Activated CD4-positive, alpha-beta T cell treated with anti-CD3 and anti-CD28 coated beads, Interleukin-2, amount 10 ng/mL, durations not matched to agents 24 days and 14 days (primary cell): ENCODE measurements at regions of chr17 and their contacts with region 1.

Region 1: GRCh38 chr17:50547035-50547735 is at the start of gene SPATA20:
- DNase-seq: peak; percentile 96
- H3K4me3 Mint-ChIP-seq: peak within 1 kb of the TSS; percentile 83
- H3K27ac Mint-ChIP-seq: peak within 1 kb of the TSS; percentile 80
- H3K4me1 Mint-ChIP-seq: peaks cover 16% of the 10 kb centered on the region
- H3K27me3 Mint-ChIP-seq: peaks cover 19% of the 10 kb centered on the region
- total RNA-seq, gene SPATA20: 21.6 and 22.4 TPM in 2 replicates

Region 2: DNA sequence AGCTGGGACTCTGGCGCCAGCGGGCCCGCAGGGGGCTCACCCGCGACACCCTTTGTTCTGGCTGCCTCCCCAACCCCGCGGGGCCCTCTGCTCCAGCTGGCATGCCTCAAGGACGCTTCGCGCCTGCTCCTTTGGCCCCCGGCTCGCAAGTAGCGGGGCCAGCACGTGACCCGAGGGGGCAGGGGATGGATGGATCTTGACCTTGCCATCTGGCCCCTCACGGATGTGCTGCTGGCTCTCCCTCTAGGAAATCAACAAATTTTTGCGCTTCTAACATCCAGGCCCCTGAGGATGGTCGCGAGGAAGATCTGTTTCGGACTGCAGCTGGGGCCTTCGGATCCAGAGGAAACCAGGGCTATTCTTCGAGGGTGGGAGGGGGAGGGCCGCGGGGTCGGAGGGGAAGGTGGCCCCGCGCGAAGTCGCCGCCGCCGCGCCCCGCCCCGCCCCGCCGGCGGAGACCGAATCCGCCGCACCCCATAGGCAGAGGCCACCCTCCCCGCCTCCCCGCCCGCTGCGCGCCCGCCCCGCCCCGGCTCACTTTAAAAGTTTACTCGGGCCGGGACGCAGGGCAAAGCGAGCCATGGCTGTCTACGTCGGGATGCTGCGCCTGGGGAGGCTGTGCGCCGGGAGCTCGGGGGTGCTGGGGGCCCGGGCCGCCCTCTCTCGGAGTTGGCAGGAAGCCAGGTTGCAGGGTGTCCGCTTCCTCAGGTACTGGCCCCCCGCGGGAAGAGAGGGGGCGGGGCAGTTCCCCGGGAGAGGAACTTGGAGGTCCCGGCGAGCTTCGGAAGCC is 121.3 kb before region 1 on chr17 and contains the start of gene ACSF2:
- intact Hi-C with region 1: no loop called
- DNase-seq: peak; percentile 92
- H3K4me3 Mint-ChIP-seq: peak within 1 kb of the TSS; percentile 87
- H3K27ac Mint-ChIP-seq: peak within 1 kb of the TSS; percentile 86
- H3K4me1 Mint-ChIP-seq: peaks cover 29% of the 10 kb centered on the region
- H3K27me3 Mint-ChIP-seq: no peaks in the 10 kb centered on the region
- total RNA-seq, gene ACSF2: 13.6 and 16.5 TPM in 2 replicates

Region 3: DNA sequence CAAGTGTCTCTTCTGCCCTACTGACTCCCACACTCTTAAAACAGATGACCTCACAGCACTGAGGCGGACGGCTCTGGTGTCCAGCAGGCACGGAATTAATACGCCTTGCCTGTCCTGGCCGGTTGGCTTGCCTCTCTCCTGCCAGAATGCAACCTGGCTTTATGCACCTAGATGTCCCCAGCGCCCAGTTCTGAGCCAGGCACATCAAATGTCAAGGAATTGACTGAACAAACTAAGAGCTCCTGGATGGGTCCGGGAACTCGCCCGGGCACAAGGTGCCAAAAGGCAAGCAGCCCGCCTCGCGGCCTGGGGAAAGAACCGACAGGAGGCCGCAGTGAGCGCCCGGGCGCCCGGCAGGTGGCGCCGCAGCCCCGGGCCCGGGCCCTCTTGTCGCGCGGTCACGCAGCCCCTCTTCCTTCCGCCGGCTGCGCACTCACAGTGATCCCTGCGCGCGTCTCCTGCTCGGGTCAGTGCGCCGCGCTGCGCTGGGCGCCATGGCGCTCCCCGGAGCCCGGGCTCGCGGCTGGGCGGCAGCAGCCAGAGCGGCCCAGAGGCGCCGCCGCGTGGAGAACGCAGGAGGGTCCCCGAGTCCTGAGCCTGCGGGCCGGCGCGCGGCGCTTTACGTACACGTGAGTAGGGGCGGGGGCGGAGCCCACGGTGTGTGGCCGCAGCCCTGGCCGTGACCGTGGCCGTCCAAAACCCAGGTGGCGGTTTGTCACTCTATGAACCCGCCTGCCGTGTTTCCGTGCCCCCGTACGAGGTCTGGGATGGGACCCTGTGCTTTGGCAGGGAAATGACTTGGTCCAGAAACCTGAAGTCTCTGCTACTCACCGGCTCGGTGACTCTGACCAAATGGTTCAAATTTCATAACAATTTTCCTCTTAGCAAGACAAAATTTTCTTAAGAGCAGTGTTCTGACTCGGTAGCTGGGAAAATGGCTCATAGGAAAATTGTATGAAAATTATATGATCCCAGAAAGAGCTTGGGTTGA is 68.5 kb before region 1 on chr17 and contains the start of gene RSAD1:
- intact Hi-C with region 1: loop called (anchors 1 kb)
- DNase-seq: peak; percentile 95
- H3K4me3 Mint-ChIP-seq: peak within 1 kb of the TSS; percentile 86
- H3K27ac Mint-ChIP-seq: peak within 1 kb of the TSS; percentile 91
- H3K4me1 Mint-ChIP-seq: peaks cover 13% of the 10 kb centered on the region
- H3K27me3 Mint-ChIP-seq: peaks cover 4% of the 10 kb centered on the region
- total RNA-seq, gene RSAD1: 53.6 and 61.2 TPM in 2 replicates

Region 4: DNA sequence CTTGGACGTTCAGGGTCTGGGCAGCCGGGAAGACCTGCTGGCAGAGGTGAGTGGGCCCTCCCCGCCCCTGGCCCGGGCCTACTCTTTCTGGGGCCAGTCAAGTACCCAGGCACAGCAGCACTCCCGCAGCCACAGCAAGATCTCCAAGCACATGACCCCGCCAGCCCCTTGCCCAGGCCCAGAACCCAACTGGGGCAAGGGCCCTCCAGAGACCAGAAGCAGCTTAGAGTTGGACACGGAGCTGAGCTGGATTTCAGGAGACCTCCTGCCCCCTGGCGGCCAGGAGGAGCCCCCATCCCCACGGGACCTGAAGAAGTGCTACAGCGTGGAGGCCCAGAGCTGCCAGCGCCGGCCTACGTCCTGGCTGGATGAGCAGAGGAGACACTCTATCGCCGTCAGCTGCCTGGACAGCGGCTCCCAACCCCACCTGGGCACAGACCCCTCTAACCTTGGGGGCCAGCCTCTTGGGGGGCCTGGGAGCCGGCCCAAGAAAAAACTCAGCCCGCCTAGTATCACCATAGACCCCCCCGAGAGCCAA is 78.9 kb after region 1 on chr17:
- intact Hi-C with region 1: loop called (anchors 1 kb)
- DNase-seq: peak; percentile 88
- H3K4me3 Mint-ChIP-seq: no peak overlapping the region
- H3K27ac Mint-ChIP-seq: no peak overlapping the region
- H3K4me1 Mint-ChIP-seq: peaks cover 10% of the 10 kb centered on the region
- H3K27me3 Mint-ChIP-seq: peaks cover 31% of the 10 kb centered on the region

Region 5: DNA sequence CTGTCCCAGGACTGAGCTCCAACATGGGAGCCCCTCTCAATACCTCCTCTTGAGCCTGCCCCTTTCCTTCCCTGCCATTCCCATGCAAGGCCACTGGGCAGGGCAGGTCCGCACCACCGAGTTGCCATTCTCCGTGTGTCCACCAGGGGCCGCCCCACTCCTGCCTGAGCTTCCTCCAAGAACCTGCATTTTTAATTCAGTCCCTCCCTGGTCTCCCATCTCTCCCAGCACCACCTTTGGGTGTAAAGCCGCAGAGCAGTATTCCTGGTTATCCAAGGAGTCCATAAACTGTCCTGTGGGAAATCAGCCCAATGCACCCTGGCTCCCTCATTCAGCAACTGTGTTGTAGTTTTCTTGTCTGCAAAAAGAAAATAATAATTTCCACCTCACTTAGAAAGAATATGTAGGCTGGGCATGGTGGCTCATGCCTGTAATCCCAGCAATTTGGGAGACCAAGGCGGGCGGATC is 236.0 kb after region 1 on chr17:
- intact Hi-C with region 1: loop called (anchors 2 kb)
- DNase-seq: peak; percentile 94
- H3K4me3 Mint-ChIP-seq: no peak overlapping the region
- H3K27ac Mint-ChIP-seq: peak overlapping the region; percentile 32
- H3K4me1 Mint-ChIP-seq: peaks cover 12% of the 10 kb centered on the region
- H3K27me3 Mint-ChIP-seq: peaks cover 23% of the 10 kb centered on the region

Region 6: DNA sequence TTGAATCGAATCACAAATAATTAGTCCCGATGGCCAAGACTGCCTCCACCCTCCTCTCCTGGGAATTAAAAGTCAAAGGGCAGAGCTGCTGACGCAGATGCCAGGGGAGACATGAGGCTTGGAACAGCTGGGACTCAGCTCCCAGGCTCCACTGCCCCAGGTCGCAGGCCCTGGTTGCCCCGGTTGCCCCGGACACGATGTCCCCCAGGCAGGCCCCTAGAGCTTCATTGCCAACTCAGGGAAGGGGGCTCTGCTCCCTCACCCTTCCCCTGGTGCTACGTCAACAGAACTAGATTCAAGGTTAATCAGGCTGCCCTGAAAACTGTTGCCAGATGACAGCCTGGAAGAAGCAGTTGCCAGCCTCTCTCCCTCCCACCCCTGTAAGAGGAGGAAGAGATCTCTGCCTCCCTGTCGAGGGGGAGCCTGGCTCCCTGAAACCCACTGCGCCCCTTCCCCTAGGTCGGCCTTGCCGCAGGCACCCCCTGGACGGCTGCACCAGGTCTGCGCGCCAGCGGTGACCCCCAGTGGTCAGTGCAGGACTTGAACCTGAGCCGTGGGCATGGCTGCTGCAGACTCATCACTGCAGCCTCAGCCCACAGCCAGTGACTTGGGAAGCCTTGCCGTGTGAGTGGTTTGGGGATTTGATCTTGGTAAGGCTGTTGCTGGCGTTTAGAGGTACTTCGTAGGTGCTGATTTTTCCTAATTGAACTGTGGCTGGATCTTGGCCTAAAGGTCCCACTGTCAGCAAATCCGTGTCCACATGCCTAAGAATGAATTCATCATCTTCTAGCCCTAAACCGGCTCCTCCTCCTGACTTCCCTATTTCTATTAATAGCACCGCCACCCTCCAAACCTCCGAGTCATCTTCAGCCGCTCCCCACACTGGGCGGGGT is 403.1 kb after region 1 on chr17:
- intact Hi-C with region 1: loop called (anchors 10 kb)
- DNase-seq: peak; percentile 85
- H3K4me3 Mint-ChIP-seq: no peak overlapping the region
- H3K27ac Mint-ChIP-seq: no peak overlapping the region
- H3K4me1 Mint-ChIP-seq: peaks cover 24% of the 10 kb centered on the region
- H3K27me3 Mint-ChIP-seq: no peaks in the 10 kb centered on the region